Psoas muscle (tissue), 8 donors: ENCODE measurements at regions of chr9 and their contacts with region 1.

Region 1: DNA sequence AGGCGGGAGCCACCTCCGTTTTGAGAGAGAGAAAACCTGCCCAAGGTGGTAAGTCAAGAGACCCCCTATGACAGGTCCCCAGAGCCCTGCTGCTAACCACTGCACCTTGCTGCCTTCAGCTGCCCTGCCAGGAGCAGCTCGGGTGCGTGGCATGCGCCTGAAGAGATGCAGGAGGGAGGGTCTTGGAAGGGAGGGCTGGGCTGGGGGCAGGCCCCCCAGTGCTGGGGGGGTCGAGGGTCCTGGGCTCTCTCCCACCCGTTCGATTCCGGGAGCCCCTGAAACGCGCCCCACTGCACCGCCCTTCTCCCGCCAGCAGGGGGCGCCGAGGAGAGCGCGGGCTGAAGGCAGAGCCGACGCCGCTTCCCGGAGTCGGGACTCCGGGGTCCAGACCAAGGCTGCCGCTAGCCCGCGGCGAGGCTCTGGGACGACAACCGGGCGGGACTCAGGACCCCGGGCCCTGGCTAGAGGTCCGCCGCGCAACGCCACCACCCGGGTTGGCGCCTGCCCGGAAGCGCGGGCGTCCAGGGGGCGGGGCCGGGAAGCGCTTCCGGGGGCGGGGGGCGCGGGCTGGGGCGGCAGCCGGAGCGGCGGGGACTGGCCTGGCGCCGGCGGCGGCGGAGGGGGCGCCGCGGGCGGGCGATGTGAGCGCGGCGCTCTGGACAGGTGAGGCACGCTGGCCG is at the start of gene ZBTB34:
- DNase-seq: peak; percentile 70 to 85
- ATAC-seq: peak; percentile 78 to 84 (median 82)
- H3K4me3 ChIP-seq: peak within 1 kb of the TSS; percentile 97
- H3K27ac ChIP-seq: peak within 1 kb of the TSS; percentile 98
- H3K4me1 ChIP-seq: peaks cover 45% of the 10 kb centered on the region
- H3K27me3 ChIP-seq: no peaks in the 10 kb centered on the region
- CTCF ChIP-seq: peak; percentile 100
- total RNA-seq, gene ZBTB34: 4.4 to 7.3 (median 5.5) TPM

Region 2: GRCh38 chr9:126914458-126915280 is 54.5 kb after region 1 on chr9 and contains the start of gene RALGPS1:
- intact Hi-C with region 1: loop called in 1 of 2 experiments (anchors 5 kb)
- DNase-seq: peak; percentile 96 to 98
- ATAC-seq: peak; percentile 99 to 100 (median 100)
- H3K4me3 ChIP-seq: peak within 1 kb of the TSS; percentile 68
- H3K27ac ChIP-seq: peak within 1 kb of the TSS; percentile 77
- H3K4me1 ChIP-seq: peaks cover 3% of the 10 kb centered on the region
- H3K27me3 ChIP-seq: no peaks in the 10 kb centered on the region
- CTCF ChIP-seq: no peak
- total RNA-seq, gene RALGPS1: 5.3 to 7.7 (median 5.7) TPM